IMR-90 (cell line): ENCODE measurements at regions of chr11 and their contacts with region 1.

Region 1: GRCh38 chr11:9025101-9025850 is 21.5 kb upstream of the NRIP3 start:
- DNase-seq: no peak
- ATAC-seq: no peak
- H3K4me3 ChIP-seq: no peak overlapping the region
- H3K27ac ChIP-seq: no peak overlapping the region
- H3K4me1 ChIP-seq: no peaks in the 10 kb centered on the region
- H3K27me3 ChIP-seq: peaks cover 2% of the 10 kb centered on the region; the same call in 1 of the 2 replicates
- CTCF ChIP-seq: no peak
- POLR2A ChIP-seq: no peak
- RAD21 ChIP-seq: no peak

Region 2: GRCh38 chr11:9078113-9079086 is 53.1 kb after region 1 on chr11:
- CTCF ChIA-PET with region 1: no interaction called
- POLR2A ChIA-PET with region 1: no interaction called
- dilution Hi-C with region 1: no loop called
- in situ Hi-C with region 1: no loop called
- intact Hi-C with region 1: loop called (anchors 5 kb)
- DNase-seq: peak; percentile 34
- ATAC-seq: peak; percentile 89
- H3K4me3 ChIP-seq: no peak overlapping the region
- H3K27ac ChIP-seq: no peak overlapping the region
- H3K4me1 ChIP-seq: no peaks in the 10 kb centered on the region; the same call in 1 of the 2 replicates
- H3K27me3 ChIP-seq: no peaks in the 10 kb centered on the region
- CTCF ChIP-seq: no peak
- POLR2A ChIP-seq: no peak
- RAD21 ChIP-seq: no peak